ENCODE measurements at regions of chr2 and their contacts with region 1.

Region 1: DNA sequence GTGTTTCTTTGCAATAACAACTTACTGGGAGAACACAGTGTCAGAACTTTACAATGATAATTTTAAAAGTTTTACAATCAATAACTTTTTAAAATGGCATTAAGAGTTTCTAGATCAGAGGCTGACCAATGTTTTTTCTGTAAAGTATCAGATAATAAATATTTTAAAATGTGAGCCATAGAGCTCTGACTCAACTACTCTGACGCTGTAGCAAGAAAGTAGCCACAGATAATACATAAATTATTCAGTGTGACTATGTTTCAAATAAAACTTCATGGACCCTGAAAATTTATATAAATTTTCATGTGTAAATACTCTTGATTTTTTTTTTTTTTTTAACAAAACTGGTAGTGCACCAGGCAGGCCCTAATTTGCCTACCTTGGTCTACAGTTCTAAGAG is 77.4 kb downstream of the CUL3 start:
- DNase-seq: no peak
- H3K4me3 Mint-ChIP-seq: no peak overlapping the region
- H3K27ac Mint-ChIP-seq: no peak overlapping the region
- H3K4me1 Mint-ChIP-seq: no peaks in the 10 kb centered on the region
- H3K27me3 Mint-ChIP-seq: no peaks in the 10 kb centered on the region
- CTCF ChIP-seq: no peak

Region 2: DNA sequence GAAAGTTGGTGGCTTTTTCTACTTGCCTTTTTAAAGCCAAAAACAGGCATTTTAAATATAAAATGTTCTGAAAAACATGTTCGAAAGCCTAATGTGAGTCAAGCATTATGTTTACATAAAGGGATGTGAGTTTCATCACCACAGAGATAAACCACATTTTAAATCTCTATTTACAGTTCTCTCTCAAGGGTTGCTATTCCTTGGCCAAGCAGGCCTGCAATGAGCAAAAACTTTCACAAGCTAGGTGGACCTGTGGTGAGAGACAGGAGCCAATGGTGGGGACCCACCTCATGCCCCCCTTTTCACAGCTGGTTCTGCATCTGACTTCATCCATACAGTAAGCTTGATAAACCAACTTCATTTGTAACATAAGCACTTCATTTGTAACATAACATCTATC is 12.3 kb after region 1 on chr2:
- CTCF ChIA-PET with region 1: interaction called, 3 read pairs
- intact Hi-C with region 1: loop called (anchors 2 kb)
- DNase-seq: no peak
- H3K4me3 Mint-ChIP-seq: no peak overlapping the region
- H3K27ac Mint-ChIP-seq: no peak overlapping the region
- H3K4me1 Mint-ChIP-seq: peaks cover 26% of the 10 kb centered on the region
- H3K27me3 Mint-ChIP-seq: no peaks in the 10 kb centered on the region
- CTCF ChIP-seq: no peak

Region 3: DNA sequence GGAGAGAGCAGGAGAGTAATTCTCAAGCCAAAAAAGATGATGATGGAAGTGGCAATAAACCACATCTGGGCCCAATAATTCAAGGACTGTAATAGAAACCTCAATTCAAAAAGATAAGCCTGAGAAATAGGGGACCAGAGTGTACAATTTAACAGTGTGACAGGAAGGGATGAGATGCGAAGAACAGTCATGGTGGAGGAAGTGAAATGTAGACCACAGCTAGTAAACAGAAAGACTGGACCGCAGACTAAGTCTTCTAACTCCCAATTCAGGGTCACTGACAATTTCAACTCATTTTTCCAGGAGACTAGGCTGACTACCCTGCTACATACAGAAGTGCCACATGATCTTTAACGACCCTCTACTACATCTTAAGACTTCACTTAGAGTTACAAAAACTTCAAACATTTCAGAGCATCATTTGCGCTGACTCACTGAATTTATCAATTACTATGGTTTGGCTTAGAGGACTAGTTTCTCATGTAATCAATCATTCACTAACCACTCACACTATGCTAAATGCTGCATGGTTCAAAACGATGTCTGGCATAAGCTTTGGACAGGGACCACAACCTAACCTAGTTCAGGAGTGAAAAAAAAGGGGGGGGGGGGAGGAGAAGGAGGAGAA is 68.4 kb after region 1 on chr2:
- CTCF ChIA-PET with region 1: no interaction called
- intact Hi-C with region 1: no loop called
- DNase-seq: no peak
- H3K4me3 Mint-ChIP-seq: no peak overlapping the region
- H3K27ac Mint-ChIP-seq: peak overlapping the region; percentile 4
- H3K4me1 Mint-ChIP-seq: peaks cover 52% of the 10 kb centered on the region
- H3K27me3 Mint-ChIP-seq: no peaks in the 10 kb centered on the region
- CTCF ChIP-seq: no peak

Measured in Calu3 (cell line).